ENCODE measurements at regions of chr2 and their contacts with region 1.

Region 1: GRCh38 chr2:168455648-168456520 is at the start of gene CERS6:
- DNase-seq: peak; percentile 47 to 88 (median 62)
- ATAC-seq: peak; percentile 92
- H3K4me3 ChIP-seq: peak within 1 kb of the TSS; percentile 59
- H3K4me3 Mint-ChIP-seq: peak within 1 kb of the TSS in 2 of 10 donors; percentile 87 to 99
- H3K27ac ChIP-seq: peak within 1 kb of the TSS; percentile 63
- H3K27ac Mint-ChIP-seq: peak within 1 kb of the TSS in 8 of 9 donors; percentile 63 to 81 (median 70)
- H3K4me1 ChIP-seq: peaks cover 0 to 24% of the 10 kb centered on the region in 2 donors
- H3K4me1 Mint-ChIP-seq: peaks cover 16 to 41% (median 34%) of the 10 kb centered on the region in 7 donors
- H3K27me3 ChIP-seq: no peaks in the 10 kb centered on the region
- H3K27me3 Mint-ChIP-seq: no peaks in the 10 kb centered on the region
- total RNA-seq, gene CERS6: 17.3 to 28.4 (median 20.9) TPM

Region 2: DNA sequence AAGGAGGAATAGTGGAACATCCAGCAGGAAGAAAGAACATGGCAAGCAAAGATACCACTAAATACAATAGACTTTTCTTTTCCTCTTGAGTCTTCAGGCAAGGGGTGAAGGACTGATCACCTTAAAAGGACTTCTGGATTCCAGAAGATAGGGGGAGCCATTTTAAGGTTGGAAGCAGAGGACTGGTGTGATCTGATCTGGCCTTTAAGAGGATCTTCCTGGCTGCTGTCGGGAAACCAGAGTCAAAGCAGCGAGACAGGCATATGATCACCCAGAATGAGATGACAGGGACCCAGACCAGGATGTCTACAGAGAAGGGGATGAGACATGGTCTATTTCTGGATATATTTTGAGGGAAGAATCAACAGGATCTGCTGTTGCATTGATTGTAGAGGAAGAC is 766.4 kb before region 1 on chr2:
- CTCF ChIA-PET with region 1: no interaction called
- POLR2A ChIA-PET with region 1: no interaction called
- intact Hi-C with region 1: no loop called
- DNase-seq: no peak
- ATAC-seq: no peak
- H3K4me3 ChIP-seq: no peak overlapping the region
- H3K4me3 Mint-ChIP-seq: no peak overlapping the region
- H3K27ac ChIP-seq: no peak overlapping the region
- H3K27ac Mint-ChIP-seq: no peak overlapping the region
- H3K4me1 ChIP-seq: no peaks in the 10 kb centered on the region
- H3K4me1 Mint-ChIP-seq: no peaks in the 10 kb centered on the region
- H3K27me3 ChIP-seq: no peaks in the 10 kb centered on the region
- H3K27me3 Mint-ChIP-seq: peaks cover 0 to 6% (median 0%) of the 10 kb centered on the region in 5 donors

Region 3: GRCh38 chr2:168404764-168405163 is 51.1 kb before region 1 on chr2:
- CTCF ChIA-PET with region 1: no interaction called
- POLR2A ChIA-PET with region 1: no interaction called
- intact Hi-C with region 1: loop called in 1 of 2 experiments (anchors 5 kb)
- DNase-seq: no peak
- ATAC-seq: no peak
- H3K4me3 ChIP-seq: no peak overlapping the region
- H3K4me3 Mint-ChIP-seq: no peak overlapping the region
- H3K27ac ChIP-seq: no peak overlapping the region
- H3K27ac Mint-ChIP-seq: no peak overlapping the region
- H3K4me1 ChIP-seq: peaks cover 0 to 10% of the 10 kb centered on the region in 2 donors
- H3K4me1 Mint-ChIP-seq: peaks cover 6 to 18% (median 13%) of the 10 kb centered on the region in 7 donors
- H3K27me3 ChIP-seq: no peaks in the 10 kb centered on the region
- H3K27me3 Mint-ChIP-seq: peaks cover 0 to 31% (median 0%) of the 10 kb centered on the region in 5 donors

Region 4: DNA sequence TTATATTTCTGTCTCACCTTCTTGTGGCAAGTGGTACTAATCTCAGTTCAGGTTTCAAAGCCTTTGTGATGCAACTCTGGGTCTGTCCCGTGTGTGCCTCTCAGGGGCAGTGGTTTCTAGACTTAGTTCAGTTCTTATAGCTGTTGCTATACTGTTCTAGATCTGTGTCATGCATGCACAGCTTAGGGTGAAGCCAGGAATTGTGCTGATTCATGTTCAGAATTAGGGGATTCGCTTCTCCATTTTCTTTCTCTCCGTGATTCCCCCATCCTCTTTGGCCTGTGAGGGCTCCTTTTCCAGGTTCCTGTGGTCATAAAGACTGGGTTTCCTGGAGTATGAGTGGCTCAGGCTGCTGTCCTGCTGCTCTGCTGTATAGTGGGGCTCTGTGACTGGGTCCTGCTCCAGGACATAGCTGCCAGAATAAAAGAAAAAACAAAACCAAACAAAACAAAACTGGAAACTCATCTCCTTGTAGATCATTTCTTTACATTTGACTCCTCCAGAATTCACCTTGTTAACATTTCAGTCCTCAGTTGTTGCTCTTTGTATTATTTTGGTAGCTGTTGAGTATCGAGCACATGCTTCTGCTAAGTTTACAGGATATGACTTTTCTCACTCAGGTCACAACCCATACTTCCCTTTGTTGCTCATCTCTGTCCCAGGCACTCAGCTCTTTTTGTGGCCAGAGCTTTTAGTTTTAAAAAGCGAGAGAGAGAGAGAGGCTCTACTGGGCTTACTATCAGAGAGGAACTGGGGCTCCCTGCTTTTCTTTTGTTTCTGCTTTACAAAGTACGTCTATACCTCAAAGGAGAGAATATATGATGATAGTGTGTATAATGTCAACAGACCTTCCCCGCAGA is 34.4 kb after region 1 on chr2:
- CTCF ChIA-PET with region 1: no interaction called
- POLR2A ChIA-PET with region 1: interaction called, 7 read pairs
- intact Hi-C with region 1: loop called (anchors 1 kb)
- DNase-seq: peak in 8 of 9 donors; percentile 38 to 62 (median 44)
- ATAC-seq: peak; percentile 85
- H3K4me3 ChIP-seq: peak overlapping the region; percentile 42
- H3K4me3 Mint-ChIP-seq: peak overlapping the region; percentile 65 to 90 (median 74)
- H3K27ac ChIP-seq: peak overlapping the region; percentile 55
- H3K27ac Mint-ChIP-seq: peak overlapping the region; percentile 77 to 91 (median 88)
- H3K4me1 ChIP-seq: peaks cover 11 to 23% of the 10 kb centered on the region in 2 donors
- H3K4me1 Mint-ChIP-seq: peaks cover 24 to 87% (median 65%) of the 10 kb centered on the region in 7 donors
- H3K27me3 ChIP-seq: no peaks in the 10 kb centered on the region
- H3K27me3 Mint-ChIP-seq: peaks cover 0 to 3% (median 0%) of the 10 kb centered on the region in 5 donors

Region 5: DNA sequence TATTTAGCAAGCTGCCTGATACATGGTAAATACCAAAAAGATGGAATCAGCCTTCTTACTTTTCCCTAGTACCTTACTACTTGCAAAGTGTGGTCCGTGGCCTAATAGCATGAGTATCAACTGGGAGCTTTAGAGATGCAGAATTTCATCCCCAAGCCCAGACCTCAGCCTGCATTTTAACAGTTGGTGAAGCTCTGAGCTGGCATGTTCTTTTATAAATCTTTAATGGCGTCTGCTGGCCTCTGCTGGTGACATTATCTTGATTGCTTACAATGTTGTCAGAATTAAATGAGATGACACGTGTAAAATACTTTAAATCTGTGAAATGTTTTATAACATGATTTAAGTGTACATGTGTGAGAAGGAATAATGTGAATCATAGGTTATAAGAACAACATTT is 231.4 kb after region 1 on chr2:
- CTCF ChIA-PET with region 1: no interaction called
- POLR2A ChIA-PET with region 1: no interaction called
- intact Hi-C with region 1: loop called in 1 of 2 experiments (anchors 5 kb)
- DNase-seq: peak in 7 of 9 donors; percentile 12 to 50 (median 31)
- ATAC-seq: no peak
- H3K4me3 ChIP-seq: no peak overlapping the region
- H3K4me3 Mint-ChIP-seq: no peak overlapping the region
- H3K27ac ChIP-seq: no peak overlapping the region
- H3K27ac Mint-ChIP-seq: no peak overlapping the region
- H3K4me1 ChIP-seq: no peaks in the 10 kb centered on the region
- H3K4me1 Mint-ChIP-seq: peaks cover 3 to 28% (median 9%) of the 10 kb centered on the region in 7 donors
- H3K27me3 ChIP-seq: no peaks in the 10 kb centered on the region
- H3K27me3 Mint-ChIP-seq: no peaks in the 10 kb centered on the region

Region 6: DNA sequence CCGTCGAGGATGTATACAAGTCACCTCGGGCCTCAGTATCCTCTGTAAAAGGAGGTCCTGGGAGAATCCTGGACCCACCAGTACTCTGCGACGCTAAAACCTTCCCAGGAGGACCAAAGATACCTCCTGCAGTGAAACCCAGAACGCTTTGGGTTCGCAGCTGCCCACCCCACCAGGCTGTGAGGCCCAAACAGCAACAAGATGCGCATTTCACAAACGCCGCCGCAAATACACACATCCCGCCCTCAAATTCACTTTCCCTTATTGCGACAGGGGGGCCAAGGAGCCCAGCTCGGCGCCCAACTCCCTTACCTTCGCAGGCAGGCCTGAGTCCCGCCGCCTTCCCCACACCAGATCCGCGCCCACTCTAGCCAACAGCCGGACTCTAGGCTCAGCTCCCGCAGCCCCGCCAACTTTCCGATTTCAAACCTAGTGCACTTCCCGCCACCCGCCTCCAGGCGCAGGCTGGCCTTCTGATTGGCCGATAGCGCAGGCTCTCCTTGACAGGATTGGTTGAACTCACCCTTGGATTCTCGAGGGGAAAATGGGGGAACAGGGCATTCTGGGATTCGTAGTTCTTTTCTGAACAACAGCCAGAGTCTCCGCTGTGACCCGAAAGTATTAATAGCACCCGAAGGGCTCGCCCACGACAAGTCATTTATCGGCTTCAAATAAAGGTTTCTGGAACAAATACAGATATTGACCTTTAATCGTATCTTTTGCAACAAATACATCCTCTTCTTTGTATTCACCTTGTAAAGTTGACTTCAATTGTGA is 434.3 kb after region 1 on chr2 and contains the start of gene SPC25:
- CTCF ChIA-PET with region 1: no interaction called
- POLR2A ChIA-PET with region 1: no interaction called
- intact Hi-C with region 1: loop called in 1 of 2 experiments (anchors 5 kb)
- DNase-seq: peak; percentile 71 to 88 (median 84)
- ATAC-seq: peak; percentile 99
- H3K4me3 ChIP-seq: peak within 1 kb of the TSS; percentile 67
- H3K4me3 Mint-ChIP-seq: peak within 1 kb of the TSS; percentile 80 to 99 (median 94)
- H3K27ac ChIP-seq: no peak within 1 kb of the TSS
- H3K27ac Mint-ChIP-seq: peak within 1 kb of the TSS in 7 of 9 donors; percentile 2 to 96 (median 29)
- H3K4me1 ChIP-seq: peaks cover 0 to 4% of the 10 kb centered on the region in 2 donors
- H3K4me1 Mint-ChIP-seq: peaks cover 0 to 27% (median 9%) of the 10 kb centered on the region in 7 donors
- H3K27me3 ChIP-seq: no peaks in the 10 kb centered on the region
- H3K27me3 Mint-ChIP-seq: peaks cover 0 to 36% (median 7%) of the 10 kb centered on the region in 5 donors
- total RNA-seq, gene SPC25: 0.24 to 24.7 (median 0.28) TPM in 4 of 5 experiments, not detected in the other